Posterior vena cava (tissue), 2 donors: ENCODE measurements at regions of chr6 and their contacts with region 1.

Region 1: DNA sequence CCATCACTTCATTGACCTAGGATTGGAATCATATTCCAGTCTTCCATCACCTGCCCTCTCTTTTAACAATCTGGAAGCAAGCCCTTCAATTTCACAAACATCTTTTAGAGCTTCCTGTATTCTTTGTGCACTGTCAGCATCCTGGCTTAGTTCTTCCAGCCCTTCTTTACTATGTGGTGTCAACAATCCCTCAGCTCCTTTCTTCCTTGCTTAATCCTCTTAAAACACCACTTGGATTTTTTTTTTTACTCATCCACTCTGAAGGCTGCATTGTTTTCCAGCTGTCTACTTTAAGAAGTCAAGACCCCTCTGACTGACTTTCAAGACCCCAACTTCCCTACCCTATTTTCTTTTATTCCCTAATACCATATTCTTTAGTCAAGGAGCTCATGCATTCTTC is 4.5 kb downstream of the MEI4 start:
- DNase-seq: no peak

Region 2: GRCh38 chr6:77688649-77689048 is 31.3 kb after region 1 on chr6:
- intact Hi-C with region 1: loop called in 1 of 2 experiments (anchors 2 kb)
- DNase-seq: no peak